Uterus (tissue), 4 donors: ENCODE measurements at regions of chr3 and their contacts with region 1.

Region 1: DNA sequence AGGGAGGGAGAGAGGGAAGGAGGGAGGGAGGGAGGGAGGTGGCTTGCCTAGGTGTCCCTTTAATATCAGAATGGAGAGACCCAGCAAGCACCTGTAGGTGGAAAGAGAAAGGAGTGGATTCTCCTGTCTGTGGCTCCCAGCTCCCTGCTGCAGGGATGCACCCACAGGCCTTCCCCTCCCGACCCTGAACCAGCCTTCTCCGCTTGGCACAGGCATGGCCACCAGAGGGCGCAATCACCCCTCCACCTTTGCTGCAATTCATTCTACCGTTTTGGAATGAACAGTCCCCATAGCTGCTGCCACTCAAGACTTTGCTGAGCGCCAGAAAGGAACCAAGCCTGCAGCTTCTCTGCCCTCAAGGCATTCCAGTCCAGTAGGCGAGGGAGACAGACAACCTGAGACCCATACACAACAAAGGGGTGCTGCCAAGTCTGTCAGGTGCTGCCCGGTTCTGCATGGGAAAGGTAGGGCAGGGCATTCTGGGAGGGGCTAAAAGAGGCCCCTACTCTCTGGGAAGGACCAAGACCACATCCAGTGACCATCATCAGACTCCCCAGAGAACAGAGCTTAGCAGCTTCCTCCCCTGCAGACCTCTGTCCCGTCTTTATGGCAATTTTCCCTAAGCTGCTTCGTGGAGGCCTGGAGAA is 4.9 kb downstream of the TLR9 start:
- DNase-seq: peak; percentile 89 to 90
- H3K4me3 ChIP-seq: no peak overlapping the region
- H3K27ac ChIP-seq: no peak overlapping the region
- H3K4me1 ChIP-seq: peaks cover 4 to 10% of the 10 kb centered on the region in 2 donors
- H3K27me3 ChIP-seq: no peaks in the 10 kb centered on the region
- CTCF ChIP-seq: peak; percentile 86 to 95 (median 88)
- POLR2A ChIP-seq: no peak

Region 2: GRCh38 chr3:52339612-52340011 is 119.1 kb after region 1 on chr3:
- intact Hi-C with region 1: loop called (anchors 5 kb)
- DNase-seq: peak in 1 of 2 donors; percentile 43
- H3K4me3 ChIP-seq: no peak overlapping the region
- H3K27ac ChIP-seq: no peak overlapping the region
- H3K4me1 ChIP-seq: no peaks in the 10 kb centered on the region
- H3K27me3 ChIP-seq: no peaks in the 10 kb centered on the region
- CTCF ChIP-seq: peak; percentile 67 to 85 (median 80)
- POLR2A ChIP-seq: no peak